HepG2 (cell line): ENCODE measurements at regions of chr1 and their contacts with region 1.

Region 1: DNA sequence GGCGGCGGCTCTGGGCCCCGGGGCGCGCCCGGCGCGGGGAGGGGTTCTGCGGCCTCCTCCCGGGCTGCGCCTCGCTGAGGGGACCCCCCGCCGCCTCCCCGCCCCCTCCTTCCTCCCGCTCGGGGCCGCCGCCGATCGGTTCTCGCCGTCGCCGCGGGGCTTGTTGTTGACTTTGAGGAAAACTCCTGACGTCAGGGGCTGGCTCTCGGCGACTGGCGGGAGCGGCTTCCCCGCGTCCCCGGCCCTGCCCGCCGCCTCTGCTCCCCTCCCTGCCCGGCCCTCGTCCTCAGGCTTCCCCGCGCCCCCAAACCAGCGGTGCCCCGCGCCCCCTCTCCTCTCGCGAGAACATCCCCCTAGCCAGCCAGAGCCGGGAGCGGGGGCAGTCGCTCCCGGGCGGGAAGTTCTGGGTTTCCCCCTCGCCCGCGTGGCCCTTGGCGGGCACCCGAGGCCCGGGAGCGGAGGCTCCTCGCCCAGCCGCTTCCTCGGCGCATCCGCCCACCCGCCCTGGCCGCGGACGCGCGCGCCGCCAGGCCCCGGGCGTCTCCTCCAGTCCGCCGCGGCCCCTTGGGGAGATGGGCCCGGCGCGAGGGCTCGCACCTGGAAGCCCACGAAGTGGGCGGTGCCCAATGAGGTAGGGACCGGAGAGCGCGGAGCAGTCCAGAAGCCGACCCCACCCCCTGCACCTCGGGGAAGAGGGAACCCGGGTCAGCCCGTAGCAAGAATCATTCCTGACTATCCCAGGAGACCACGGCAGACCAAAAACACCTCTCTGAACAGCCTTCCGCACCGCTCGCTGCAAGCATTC is 611 bp upstream of the AKT3 start:
- DNase-seq: peak; percentile 3
- ATAC-seq: peak; percentile 70
- H3K4me3 ChIP-seq: peak overlapping the region; percentile 40 to 49 (median 48); a peak in 5 of 6 replicates
- H3K27ac ChIP-seq: no peak overlapping the region
- H3K4me1 ChIP-seq: peaks cover 5% of the 10 kb centered on the region; the same call in 1 of the 2 replicates
- H3K27me3 ChIP-seq: peaks cover 3 to 29% of the 10 kb centered on the region in 2 experiments; a peak in 4 of 5 replicates
- CTCF ChIP-seq: no peak
- EP300 ChIP-seq: no peak
- POLR2A ChIP-seq: no peak
- RAD21 ChIP-seq: no peak

Region 2: DNA sequence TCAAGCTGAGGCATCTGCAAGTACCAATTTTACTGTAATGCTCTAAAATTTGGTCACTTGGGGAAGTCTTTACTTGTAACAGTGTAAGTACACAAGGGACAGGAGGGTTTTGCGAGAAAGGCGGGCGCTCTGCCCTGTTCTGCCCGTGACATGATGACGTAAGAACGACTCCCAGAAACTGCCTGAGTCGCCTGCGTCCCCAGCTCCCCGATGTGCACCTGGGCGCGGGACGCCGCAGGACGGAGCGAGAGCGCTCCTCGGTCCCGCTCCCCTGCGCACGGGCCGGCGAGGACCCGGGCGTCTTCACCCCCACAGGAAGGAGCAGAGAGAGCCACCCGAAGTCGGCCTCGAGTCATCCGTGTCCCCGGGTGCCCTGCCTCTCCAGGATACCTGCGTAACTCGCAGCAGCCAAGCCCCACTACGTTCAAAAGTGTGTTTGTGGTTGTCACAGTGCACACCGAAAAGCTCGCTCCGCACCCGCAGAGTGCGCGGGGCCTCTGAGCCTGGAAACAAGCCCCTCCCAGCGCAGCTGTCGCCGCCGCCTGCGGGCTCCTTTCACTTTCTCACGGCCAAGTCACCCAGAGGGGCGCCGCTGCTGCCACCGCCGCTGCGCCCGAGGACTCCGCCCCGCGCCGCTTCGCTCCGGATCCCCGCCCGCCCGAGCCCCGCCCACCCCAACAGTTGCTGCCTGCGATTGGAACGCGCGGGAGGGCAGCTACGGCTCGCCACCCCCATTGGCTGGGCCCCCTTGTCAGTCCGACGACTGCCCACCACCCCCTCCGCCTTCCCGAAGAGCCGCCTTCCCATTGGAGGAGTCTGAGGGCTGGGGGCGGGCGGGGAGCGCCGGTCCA is 197.2 kb after region 1 on chr1:
- CTCF ChIA-PET with region 1: no interaction called
- POLR2A ChIA-PET with region 1: no interaction called
- in situ Hi-C with region 1: no loop called
- intact Hi-C with region 1: loop called (anchors 10 kb)
- DNase-seq: peak; percentile 96
- ATAC-seq: peak; percentile 95
- H3K4me3 ChIP-seq: peak overlapping the region; percentile 70 to 100 (median 93)
- H3K27ac ChIP-seq: peak overlapping the region; percentile 77
- H3K4me1 ChIP-seq: peaks cover 32% of the 10 kb centered on the region
- H3K27me3 ChIP-seq: peaks cover 0 to 6% of the 10 kb centered on the region in 2 experiments; a peak in 2 of 5 replicates
- CTCF ChIP-seq: no peak
- EP300 ChIP-seq: no peak
- POLR2A ChIP-seq: peak; percentile 67 to 77
- RAD21 ChIP-seq: peak; percentile 50; the same call in 1 of the 2 replicates

Region 3: DNA sequence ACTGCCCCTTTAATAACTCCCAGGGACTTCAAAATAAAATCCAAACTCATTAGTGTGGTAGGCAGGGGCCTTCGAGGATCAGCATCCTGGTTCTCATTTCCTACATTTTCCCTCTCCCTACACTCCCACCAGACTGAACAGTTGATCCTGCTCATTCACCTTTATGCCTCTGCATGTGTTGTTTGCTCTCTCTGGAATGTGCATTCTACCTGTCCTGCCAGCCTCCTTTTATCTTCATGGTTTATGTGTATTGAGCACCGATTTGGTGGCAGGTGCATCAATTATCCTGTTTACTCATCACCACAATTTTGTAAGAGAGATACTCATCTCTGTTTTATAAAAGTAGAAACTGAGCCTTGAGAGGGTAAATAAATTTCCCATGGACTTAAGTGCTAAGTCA is 476.1 kb after region 1 on chr1:
- CTCF ChIA-PET with region 1: no interaction called
- POLR2A ChIA-PET with region 1: no interaction called
- in situ Hi-C with region 1: no loop called
- intact Hi-C with region 1: no loop called
- DNase-seq: no peak
- ATAC-seq: peak; percentile 51; the same call in 1 of the 3 replicates
- H3K4me3 ChIP-seq: no peak overlapping the region
- H3K27ac ChIP-seq: no peak overlapping the region
- H3K4me1 ChIP-seq: peaks cover 50% of the 10 kb centered on the region
- H3K27me3 ChIP-seq: no peaks in the 10 kb centered on the region
- CTCF ChIP-seq: no peak
- EP300 ChIP-seq: no peak
- POLR2A ChIP-seq: no peak
- RAD21 ChIP-seq: no peak